Activated T-helper 2 cell treated with anti-CD3 and anti-CD28 coated beads, Interferon-gamma antibody, Interleukin-2, Interleukin-4, amounts not matched to agents 10 μg/mL and 5 μg/mL and 100 μg/mL, durations not matched to agents 14 hours and 24 hours and 36 hours (primary cell): ENCODE measurements at regions of chr11 and their contacts with region 1.

Region 1: GRCh38 chr11:125429166-125429707 is 66.8 kb downstream of the FEZ1 start:
- DNase-seq: peak; percentile 15
- H3K4me3 Mint-ChIP-seq: no peak overlapping the region
- H3K27ac Mint-ChIP-seq: no peak overlapping the region
- H3K4me1 Mint-ChIP-seq: no peaks in the 10 kb centered on the region
- H3K27me3 Mint-ChIP-seq: no peaks in the 10 kb centered on the region

Region 2: GRCh38 chr11:125625630-125626287 is 196.5 kb after region 1 on chr11:
- intact Hi-C with region 1: no loop called
- DNase-seq: peak; percentile 85
- H3K4me3 Mint-ChIP-seq: peak overlapping the region; percentile 91
- H3K27ac Mint-ChIP-seq: peak overlapping the region; percentile 93
- H3K4me1 Mint-ChIP-seq: peaks cover 28% of the 10 kb centered on the region
- H3K27me3 Mint-ChIP-seq: no peaks in the 10 kb centered on the region

Region 3: GRCh38 chr11:125874556-125875124 is 445.4 kb after region 1 on chr11:
- intact Hi-C with region 1: loop called (anchors 10 kb)
- DNase-seq: no peak
- H3K4me3 Mint-ChIP-seq: no peak overlapping the region
- H3K27ac Mint-ChIP-seq: no peak overlapping the region
- H3K4me1 Mint-ChIP-seq: peaks cover 1% of the 10 kb centered on the region
- H3K27me3 Mint-ChIP-seq: peaks cover 6% of the 10 kb centered on the region

Region 4: DNA sequence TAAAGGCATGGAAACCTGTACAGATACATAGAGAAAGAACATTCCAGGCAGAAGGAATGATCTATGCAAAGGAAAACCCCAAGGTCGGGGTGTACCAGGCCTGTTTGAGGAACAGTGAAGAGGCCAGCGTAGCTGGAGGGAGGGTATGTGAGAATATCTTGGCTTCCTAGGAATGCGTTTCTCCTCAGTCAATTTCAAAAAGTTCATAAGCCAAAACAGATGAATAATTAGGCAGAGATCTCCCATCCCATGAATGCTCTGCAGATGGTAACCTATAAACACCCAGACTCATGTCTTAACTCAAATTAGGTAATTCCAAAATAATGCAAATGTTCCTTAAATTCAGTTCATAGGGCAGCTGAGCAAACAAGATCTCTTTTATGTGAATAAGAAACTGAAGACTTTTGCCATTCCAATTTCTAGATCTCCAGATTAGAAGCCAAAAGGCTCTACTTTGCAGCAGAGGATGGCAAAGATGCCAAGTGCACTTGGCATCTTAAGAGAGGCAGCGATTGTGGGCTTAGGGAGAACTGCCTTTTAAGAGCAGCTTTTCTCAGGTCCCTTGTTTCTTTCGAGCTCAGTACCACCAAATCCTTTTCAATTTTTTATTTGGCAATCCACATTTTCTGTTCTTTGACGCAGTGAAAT is 795.5 kb after region 1 on chr11:
- intact Hi-C with region 1: no loop called
- DNase-seq: no peak
- H3K4me3 Mint-ChIP-seq: no peak overlapping the region
- H3K27ac Mint-ChIP-seq: no peak overlapping the region
- H3K4me1 Mint-ChIP-seq: peaks cover 3% of the 10 kb centered on the region
- H3K27me3 Mint-ChIP-seq: no peaks in the 10 kb centered on the region